ENCODE measurements at regions of chr5 and their contacts with region 1.

Region 1: GRCh38 chr5:5340206-5340729 is 82.2 kb upstream of the ICE1 start:
- DNase-seq: peak; percentile 68 to 89
- ATAC-seq: peak; percentile 98 to 99
- H3K4me3 ChIP-seq: peak overlapping the region in 3 of 4 donors; percentile 6 to 16 (median 7)
- H3K27ac ChIP-seq: peak overlapping the region; percentile 71 to 80 (median 76)
- H3K4me1 ChIP-seq: peaks cover 11 to 13% of the 10 kb centered on the region in 2 donors
- H3K27me3 ChIP-seq: no peaks in the 10 kb centered on the region
- CTCF ChIP-seq: peak; percentile 45 to 62 (median 51)
- POLR2A ChIP-seq: no peak

Region 2: DNA sequence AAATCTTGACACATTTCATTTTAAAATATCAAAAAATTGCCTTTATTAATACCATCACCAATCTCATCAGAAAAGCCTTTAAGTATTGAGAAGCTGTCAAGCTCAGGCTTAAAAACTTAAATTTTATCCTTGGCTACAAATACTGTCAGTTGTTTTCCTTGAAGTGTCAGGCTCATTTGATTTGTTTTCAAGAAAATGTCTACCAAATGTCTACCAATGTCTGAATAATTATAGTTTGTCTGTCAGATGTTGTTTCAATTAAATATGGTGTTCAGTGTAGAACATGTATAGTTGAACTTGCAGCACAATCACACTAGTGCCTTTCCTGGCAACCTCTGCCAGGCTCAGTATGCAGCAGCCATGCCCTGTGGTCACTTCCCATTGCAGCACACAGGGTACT is 655.3 kb before region 1 on chr5:
- in situ Hi-C with region 1: no loop called
- intact Hi-C with region 1: no loop called
- DNase-seq: no peak
- ATAC-seq: no peak
- H3K4me3 ChIP-seq: no peak overlapping the region
- H3K27ac ChIP-seq: no peak overlapping the region
- H3K4me1 ChIP-seq: no peaks in the 10 kb centered on the region
- H3K27me3 ChIP-seq: no peaks in the 10 kb centered on the region
- CTCF ChIP-seq: no peak
- POLR2A ChIP-seq: no peak

Region 3: GRCh38 chr5:5141625-5142532 is 198.4 kb before region 1 on chr5:
- in situ Hi-C with region 1: no loop called
- intact Hi-C with region 1: loop called (anchors 5 kb)
- DNase-seq: peak in 1 of 2 donors; percentile 22
- ATAC-seq: peak; percentile 68 to 81
- H3K4me3 ChIP-seq: peak overlapping the region; percentile 42 to 48 (median 44)
- H3K27ac ChIP-seq: no peak overlapping the region
- H3K4me1 ChIP-seq: peaks cover 7 to 22% of the 10 kb centered on the region in 2 donors
- H3K27me3 ChIP-seq: peaks cover 20 to 25% (median 24%) of the 10 kb centered on the region in 3 donors
- CTCF ChIP-seq: peak; percentile 72 to 82 (median 75)
- POLR2A ChIP-seq: no peak

Region 4: GRCh38 chr5:5158472-5158895 is 181.8 kb before region 1 on chr5:
- in situ Hi-C with region 1: no loop called
- intact Hi-C with region 1: loop called (anchors 2 kb)
- DNase-seq: no peak
- ATAC-seq: no peak
- H3K4me3 ChIP-seq: no peak overlapping the region
- H3K27ac ChIP-seq: no peak overlapping the region
- H3K4me1 ChIP-seq: peaks cover 25% of the 10 kb centered on the region in 2 donors
- H3K27me3 ChIP-seq: no peaks in the 10 kb centered on the region
- CTCF ChIP-seq: no peak
- POLR2A ChIP-seq: no peak

Region 5: DNA sequence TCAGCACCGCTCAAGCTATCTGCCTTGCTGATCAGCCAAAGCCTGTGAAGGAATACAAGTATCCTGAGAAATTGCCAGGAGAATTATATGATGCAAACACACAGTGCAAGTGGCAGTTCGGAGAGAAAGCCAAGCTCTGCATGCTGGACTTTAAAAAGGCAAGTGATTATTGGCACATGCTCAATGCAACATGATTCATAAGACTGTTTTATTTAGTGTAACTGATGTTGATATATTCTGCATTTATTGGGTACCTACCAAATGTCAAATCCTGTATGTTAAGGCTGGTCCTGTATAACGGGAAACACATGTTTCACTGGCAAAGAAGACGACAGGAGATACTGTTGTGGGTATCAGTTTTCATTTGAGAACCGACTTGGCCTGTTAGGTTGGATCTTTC is 131.2 kb before region 1 on chr5:
- in situ Hi-C with region 1: no loop called
- intact Hi-C with region 1: loop called (anchors 5 kb)
- DNase-seq: peak in 1 of 2 donors; percentile 17
- ATAC-seq: peak; percentile 86 to 91
- H3K4me3 ChIP-seq: peak overlapping the region in 1 of 4 donors; percentile 30
- H3K27ac ChIP-seq: peak overlapping the region in 3 of 4 donors; percentile 55 to 58 (median 56)
- H3K4me1 ChIP-seq: peaks cover 0 to 3% of the 10 kb centered on the region in 2 donors
- H3K27me3 ChIP-seq: no peaks in the 10 kb centered on the region
- CTCF ChIP-seq: no peak
- POLR2A ChIP-seq: no peak

Region 6: GRCh38 chr5:5313101-5313635 is 27.1 kb before region 1 on chr5:
- in situ Hi-C with region 1: no loop called
- intact Hi-C with region 1: loop called (anchors 2 kb)
- DNase-seq: peak; percentile 58 to 65
- ATAC-seq: peak; percentile 70 to 81
- H3K4me3 ChIP-seq: no peak overlapping the region
- H3K27ac ChIP-seq: peak overlapping the region; percentile 71 to 84 (median 80)
- H3K4me1 ChIP-seq: peaks cover 35 to 36% of the 10 kb centered on the region in 2 donors
- H3K27me3 ChIP-seq: no peaks in the 10 kb centered on the region
- CTCF ChIP-seq: no peak
- POLR2A ChIP-seq: peak in 1 of 2 donors; percentile 31

Region 7: DNA sequence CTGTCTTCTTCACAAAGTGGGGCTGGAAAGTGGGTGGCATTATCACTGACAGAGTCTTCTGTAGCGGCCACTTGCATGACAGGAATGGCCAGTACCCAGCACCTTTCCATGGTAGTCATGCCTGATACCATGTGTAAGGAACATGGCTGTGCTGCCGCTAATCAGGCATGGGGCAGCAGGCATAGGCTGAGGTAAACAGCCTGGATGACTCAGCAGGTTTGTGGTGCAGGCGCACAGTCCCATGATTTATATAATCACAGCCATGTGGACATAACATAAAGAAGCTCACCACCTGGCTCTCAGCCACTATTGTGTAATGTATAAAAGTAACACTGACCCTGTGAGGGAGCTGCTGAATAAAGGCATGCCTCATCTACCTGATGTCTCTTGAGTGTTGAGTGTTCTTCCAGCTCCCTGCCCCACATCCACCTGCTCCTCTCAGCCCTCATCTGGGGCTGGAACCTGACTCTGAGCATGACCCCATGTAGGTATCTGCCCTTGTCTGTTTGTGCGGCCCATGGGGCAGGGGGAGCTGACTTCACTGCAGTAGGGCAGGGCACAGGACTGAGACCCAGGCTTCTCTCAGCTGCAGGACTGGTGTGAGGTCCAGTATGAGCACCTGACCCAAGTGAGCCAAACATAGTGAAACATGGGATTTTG is 69.0 kb after region 1 on chr5:
- in situ Hi-C with region 1: no loop called
- intact Hi-C with region 1: no loop called
- DNase-seq: no peak
- ATAC-seq: no peak
- H3K4me3 ChIP-seq: no peak overlapping the region
- H3K27ac ChIP-seq: no peak overlapping the region
- H3K4me1 ChIP-seq: no peaks in the 10 kb centered on the region
- H3K27me3 ChIP-seq: no peaks in the 10 kb centered on the region
- CTCF ChIP-seq: no peak
- POLR2A ChIP-seq: no peak